MCF 10A (cell line): ENCODE measurements at regions of chr7 and their contacts with region 1.

Region 1: DNA sequence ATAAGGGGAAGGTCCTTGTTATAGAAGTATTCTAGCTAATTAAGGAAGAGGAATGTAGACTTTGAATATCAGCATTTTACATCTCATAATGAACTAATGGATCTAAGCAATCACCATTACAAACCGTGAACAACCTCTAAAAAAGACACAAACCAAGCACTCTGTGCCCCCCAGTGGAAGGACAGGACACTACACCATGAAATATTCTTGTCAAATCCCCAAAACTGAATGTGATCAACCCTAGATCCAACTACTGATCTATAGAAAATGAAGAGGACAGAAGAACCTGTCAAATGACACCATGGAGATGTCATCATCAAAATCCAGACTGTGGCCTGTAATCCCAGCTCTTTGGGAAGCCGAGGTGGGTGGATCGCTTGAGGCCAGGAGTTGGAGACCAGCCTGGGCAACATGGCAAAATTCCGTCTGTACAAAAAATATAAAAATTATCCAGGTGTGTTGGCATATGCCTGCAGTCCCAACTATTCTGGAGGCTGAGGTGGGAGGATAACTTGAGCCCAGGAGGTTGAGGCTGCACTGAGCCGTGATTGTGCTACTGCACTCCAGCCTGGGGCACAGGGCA is 111.3 kb upstream of the CARD11 start:
- DNase-seq: peak; percentile 57
- H3K4me3 Mint-ChIP-seq: no peak overlapping the region
- H3K27ac Mint-ChIP-seq: no peak overlapping the region
- H3K4me1 Mint-ChIP-seq: peaks cover 5% of the 10 kb centered on the region
- H3K27me3 Mint-ChIP-seq: no peaks in the 10 kb centered on the region
- CTCF ChIP-seq: peak; percentile 67

Region 2: DNA sequence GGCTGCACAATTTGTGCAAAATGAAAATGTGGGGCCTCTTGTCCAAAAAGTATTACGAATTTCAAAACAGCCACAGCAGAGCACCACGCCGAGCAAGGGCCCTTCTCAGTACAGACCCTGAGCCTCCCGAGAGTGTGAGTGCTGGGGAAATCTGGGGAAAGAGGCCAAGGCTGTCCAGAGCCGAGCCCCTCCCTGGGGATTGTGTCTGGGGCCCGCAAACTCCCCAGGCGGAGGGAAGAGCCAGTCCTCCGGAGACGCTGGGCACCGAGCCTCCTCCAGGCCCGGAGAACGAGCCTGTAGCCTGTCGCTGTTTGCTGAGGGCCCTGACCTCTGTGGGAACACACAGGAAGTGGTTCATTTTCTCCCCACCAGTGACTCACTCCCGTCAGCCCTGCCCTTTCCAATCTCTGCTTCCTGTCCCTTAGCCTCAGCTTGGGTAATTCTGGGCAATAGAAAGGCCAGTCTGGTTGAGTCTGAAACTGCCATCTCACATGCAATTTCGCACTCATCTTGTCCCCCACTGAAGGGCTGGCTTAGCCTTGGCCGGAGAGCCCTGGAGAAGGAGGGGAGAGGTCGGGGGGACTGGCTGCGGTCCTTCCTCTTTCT is 291.4 kb before region 1 on chr7:
- CTCF ChIA-PET with region 1: interaction called, 6 read pairs
- POLR2A ChIA-PET with region 1: no interaction called
- intact Hi-C with region 1: loop called (anchors 1 kb)
- DNase-seq: peak; percentile 95
- H3K4me3 Mint-ChIP-seq: peak overlapping the region; percentile 72
- H3K27ac Mint-ChIP-seq: peak overlapping the region; percentile 98
- H3K4me1 Mint-ChIP-seq: peaks cover 14% of the 10 kb centered on the region
- H3K27me3 Mint-ChIP-seq: no peaks in the 10 kb centered on the region
- CTCF ChIP-seq: no peak